HepG2 (cell line): ENCODE measurements at regions of chr1 and their contacts with region 1.

Region 1: GRCh38 chr1:154220071-154220969 is at the start of gene UBAP2L:
- DNase-seq: peak; percentile 98
- ATAC-seq: peak; percentile 95
- H3K4me3 ChIP-seq: peak within 1 kb of the TSS; percentile 90 to 99 (median 96)
- H3K27ac ChIP-seq: peak within 1 kb of the TSS; percentile 100
- H3K4me1 ChIP-seq: peaks cover 79% of the 10 kb centered on the region
- H3K27me3 ChIP-seq: no peaks in the 10 kb centered on the region; a peak in 1 of 5 replicates
- CTCF ChIP-seq: 0 out of 2 replicates have a peak, but pooled peaks have one; percentile 4
- EP300 ChIP-seq: peak in 1 of 2 experiments; percentile 39; a peak in 1 of 4 replicates
- POLR2A ChIP-seq: peak; percentile 73 to 87
- RAD21 ChIP-seq: no peak; the same call in 1 of the 2 replicates
- total RNA-seq, gene UBAP2L: 74.2 and 75.9 TPM in 2 replicates

Region 2: GRCh38 chr1:154193821-154194220 is 26.5 kb before region 1 on chr1:
- CTCF ChIA-PET with region 1: no interaction called
- POLR2A ChIA-PET with region 1: interaction called, 12 read pairs
- in situ Hi-C with region 1: no loop called
- intact Hi-C with region 1: no loop called
- DNase-seq: peak; percentile 52
- ATAC-seq: peak; percentile 70
- H3K4me3 ChIP-seq: peak overlapping the region; percentile 38 to 64 (median 41)
- H3K27ac ChIP-seq: no peak overlapping the region
- H3K4me1 ChIP-seq: peaks cover 56% of the 10 kb centered on the region
- H3K27me3 ChIP-seq: peaks cover 0 to 13% of the 10 kb centered on the region in 2 experiments; a peak in 3 of 5 replicates
- CTCF ChIP-seq: no peak
- EP300 ChIP-seq: no peak
- POLR2A ChIP-seq: peak in 1 of 2 experiments; percentile 42; a peak in 1 of 4 replicates
- RAD21 ChIP-seq: no peak

Region 3: GRCh38 chr1:154240294-154240831 is 20.0 kb after region 1 on chr1:
- CTCF ChIA-PET with region 1: no interaction called
- POLR2A ChIA-PET with region 1: interaction called, 29 read pairs
- in situ Hi-C with region 1: no loop called
- intact Hi-C with region 1: loop called (anchors 2 kb)
- DNase-seq: no peak
- ATAC-seq: no peak
- H3K4me3 ChIP-seq: no peak overlapping the region
- H3K27ac ChIP-seq: no peak overlapping the region
- H3K4me1 ChIP-seq: peaks cover 53% of the 10 kb centered on the region
- H3K27me3 ChIP-seq: no peaks in the 10 kb centered on the region
- CTCF ChIP-seq: no peak
- EP300 ChIP-seq: no peak
- POLR2A ChIP-seq: no peak
- RAD21 ChIP-seq: no peak